Endothelial cell of umbilical vein (primary cell): ENCODE measurements at regions of chr1 and their contacts with region 1.

Region 1: DNA sequence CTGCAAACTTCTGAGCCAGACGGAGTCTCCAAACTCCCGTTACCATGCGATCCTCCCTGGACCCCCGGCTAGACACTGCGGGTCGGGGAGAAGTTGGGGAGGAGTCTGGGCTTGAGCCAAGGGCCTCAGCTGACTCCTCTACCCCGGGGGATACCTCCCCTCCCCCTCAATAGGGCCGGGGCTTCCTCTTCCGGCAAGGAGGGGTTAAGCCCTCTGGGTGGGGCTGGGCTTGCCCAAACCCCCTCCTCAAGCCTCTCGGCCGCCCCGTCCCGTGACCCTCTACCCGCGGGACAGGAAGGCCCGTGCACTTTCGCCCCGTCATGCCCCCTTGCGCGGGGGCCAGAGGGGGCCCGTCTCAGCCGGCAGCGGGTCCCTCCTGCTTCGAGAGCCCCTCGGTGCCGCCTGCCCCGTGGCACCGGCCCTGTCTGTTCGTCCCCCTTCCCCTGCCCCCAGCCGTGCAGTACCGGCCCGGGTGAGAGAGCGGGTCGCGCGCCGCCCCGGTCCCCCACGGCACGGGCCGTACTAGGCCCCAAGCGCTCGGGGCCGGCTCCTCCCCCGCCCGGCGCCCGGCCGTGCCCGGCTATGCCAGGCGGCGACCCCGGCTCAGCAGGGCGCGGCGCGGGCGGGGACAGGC is 652 bp downstream of the ARL8A start:
- DNase-seq: peak; percentile 30
- H3K4me3 ChIP-seq: peak overlapping the region; percentile 68 to 94 (median 77)
- H3K27ac ChIP-seq: peak overlapping the region; percentile 52
- H3K4me1 ChIP-seq: peaks cover 21% of the 10 kb centered on the region
- H3K27me3 ChIP-seq: no peaks in the 10 kb centered on the region
- CTCF ChIP-seq: no peak
- POLR2A ChIP-seq: no peak

Region 2: GRCh38 chr1:202154766-202155477 is 11.0 kb after region 1 on chr1:
- CTCF ChIA-PET with region 1: interaction called, 13 read pairs
- POLR2A ChIA-PET with region 1: interaction called, 3 read pairs
- dilution Hi-C with region 1: no loop called
- intact Hi-C with region 1: no loop called
- DNase-seq: peak; percentile 59
- H3K4me3 ChIP-seq: no peak overlapping the region
- H3K27ac ChIP-seq: no peak overlapping the region
- H3K4me1 ChIP-seq: peaks cover 15% of the 10 kb centered on the region
- H3K27me3 ChIP-seq: no peaks in the 10 kb centered on the region
- CTCF ChIP-seq: peak; percentile 41 to 54
- POLR2A ChIP-seq: no peak